ENCODE measurements at regions of chr1 and their contacts with region 1.

Region 1: DNA sequence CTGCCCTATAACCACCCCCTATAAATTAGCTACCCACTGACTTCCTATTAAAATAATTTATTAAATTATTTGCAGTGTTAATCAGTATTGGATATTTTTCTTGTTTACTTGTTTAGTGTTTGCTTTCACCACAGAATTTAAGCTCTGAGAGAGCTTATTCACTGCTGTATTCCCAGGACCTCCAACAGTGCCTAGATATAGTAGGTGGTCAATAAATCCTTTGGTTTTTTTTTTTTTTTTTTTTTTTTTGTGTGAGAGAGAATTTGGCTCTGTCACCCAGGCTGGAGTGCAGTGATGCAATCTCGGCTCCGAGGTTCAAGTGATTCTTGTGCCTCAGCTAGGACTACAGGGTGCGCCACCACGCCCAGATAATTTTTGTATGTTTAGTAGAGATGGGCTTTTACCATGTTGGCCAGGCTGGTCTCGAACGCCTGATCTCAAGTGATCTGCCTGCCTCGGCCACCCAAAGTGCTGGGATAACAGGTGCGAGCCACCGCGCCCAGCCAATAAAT is 1.1 kb upstream of the OSBPL9 start:
- DNase-seq: no peak
- ATAC-seq: no peak
- H3K4me3 ChIP-seq: no peak overlapping the region
- H3K27ac ChIP-seq: no peak overlapping the region; the same call in 1 of the 2 replicates
- H3K4me1 ChIP-seq: peaks cover 35% of the 10 kb centered on the region
- H3K27me3 ChIP-seq: no peaks in the 10 kb centered on the region
- CTCF ChIP-seq: no peak

Region 2: DNA sequence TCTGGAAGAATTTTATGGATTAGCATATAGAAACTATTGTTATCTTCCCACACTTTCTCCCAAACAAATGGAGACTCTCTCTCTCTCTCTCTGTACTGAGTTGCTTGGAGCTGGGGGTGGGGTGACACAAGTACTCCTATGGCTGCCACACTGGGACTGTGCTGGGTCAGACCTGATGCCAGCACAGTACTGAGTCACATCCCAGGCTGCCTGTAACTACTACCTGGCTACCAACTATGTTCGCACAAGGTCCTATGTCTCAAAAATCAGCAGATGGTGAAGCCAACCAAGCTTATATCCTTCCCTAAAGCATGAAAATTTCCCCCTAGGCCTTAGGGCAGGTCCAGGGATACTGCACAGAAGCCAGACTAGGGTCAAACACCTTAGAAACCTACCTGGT is 722.4 kb before region 1 on chr1:
- CTCF ChIA-PET with region 1: no interaction called
- POLR2A ChIA-PET with region 1: no interaction called
- in situ Hi-C with region 1: no loop called
- intact Hi-C with region 1: no loop called
- DNase-seq: no peak
- ATAC-seq: no peak
- H3K4me3 ChIP-seq: no peak overlapping the region
- H3K27ac ChIP-seq: no peak overlapping the region
- H3K4me1 ChIP-seq: no peaks in the 10 kb centered on the region
- H3K27me3 ChIP-seq: no peaks in the 10 kb centered on the region
- CTCF ChIP-seq: no peak

Region 3: DNA sequence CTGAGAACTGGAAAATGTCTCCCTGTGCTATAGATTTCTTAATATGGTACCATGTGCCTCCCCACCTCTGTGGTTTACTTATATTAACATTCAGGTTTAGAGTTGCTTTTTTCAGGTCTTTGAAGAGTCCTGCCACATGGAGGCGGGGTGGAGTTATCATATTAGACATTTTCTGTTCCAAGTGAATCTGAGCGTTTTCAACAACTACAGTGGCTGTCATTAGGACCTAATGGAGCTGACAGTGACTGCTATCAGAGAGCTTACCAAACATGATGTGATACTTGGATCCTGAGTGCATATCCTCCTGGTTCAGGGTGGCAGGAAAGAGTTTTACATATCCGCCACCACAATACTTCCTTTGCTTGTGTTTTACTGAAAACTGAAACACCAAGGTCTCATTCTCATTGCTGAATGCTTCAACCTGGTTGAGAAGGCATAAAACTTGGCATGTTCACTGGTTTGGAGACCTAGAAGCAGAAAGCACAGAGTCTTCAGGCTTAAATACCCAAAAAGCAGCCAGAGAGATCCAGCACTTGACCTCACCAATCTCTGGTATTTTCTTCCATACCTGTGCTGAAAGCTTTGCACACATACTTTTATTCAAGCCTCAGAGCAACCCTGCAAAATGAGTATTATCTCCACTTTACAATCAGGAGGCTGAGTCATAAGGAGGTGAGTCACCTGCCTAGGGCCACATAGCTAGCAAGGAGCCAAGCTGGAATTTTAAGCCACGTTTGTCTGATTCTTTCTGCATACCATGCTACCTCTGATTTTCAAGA is 46.4 kb before region 1 on chr1:
- CTCF ChIA-PET with region 1: interaction called, 10 read pairs
- POLR2A ChIA-PET with region 1: interaction called, 5 read pairs
- in situ Hi-C with region 1: no loop called
- intact Hi-C with region 1: no loop called
- DNase-seq: peak; percentile 78
- ATAC-seq: peak; percentile 94
- H3K4me3 ChIP-seq: peak overlapping the region in 1 of 2 experiments; percentile 7; a peak in 1 of 4 replicates
- H3K27ac ChIP-seq: peak overlapping the region; percentile 94
- H3K4me1 ChIP-seq: peaks cover 61% of the 10 kb centered on the region
- H3K27me3 ChIP-seq: no peaks in the 10 kb centered on the region
- CTCF ChIP-seq: peak; percentile 62